GM10248 (cell line): ENCODE measurements at regions of chr4 and their contacts with region 1.

Region 1: DNA sequence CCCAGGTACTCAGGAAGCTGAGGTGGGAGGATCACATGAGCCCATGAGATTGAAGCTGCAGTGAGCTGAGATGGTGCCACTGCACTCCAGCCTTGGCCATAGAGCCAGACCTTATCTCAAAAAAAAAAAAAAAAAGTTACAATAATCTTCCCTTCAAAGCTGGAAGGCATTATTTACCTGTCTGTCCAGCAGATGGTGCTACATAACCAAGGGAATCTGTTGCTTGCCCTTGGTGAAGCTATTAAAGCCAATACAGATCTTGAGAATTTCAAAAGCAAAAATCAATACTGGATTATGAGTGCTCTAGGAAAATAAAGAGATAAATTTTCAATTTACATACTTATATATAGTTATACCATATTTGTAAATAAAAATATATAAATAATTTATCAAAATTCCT is 25.9 kb downstream of the PKD2 start:
- DNase-seq: peak; percentile 50
- CTCF ChIP-seq: peak; percentile 70

Region 2: DNA sequence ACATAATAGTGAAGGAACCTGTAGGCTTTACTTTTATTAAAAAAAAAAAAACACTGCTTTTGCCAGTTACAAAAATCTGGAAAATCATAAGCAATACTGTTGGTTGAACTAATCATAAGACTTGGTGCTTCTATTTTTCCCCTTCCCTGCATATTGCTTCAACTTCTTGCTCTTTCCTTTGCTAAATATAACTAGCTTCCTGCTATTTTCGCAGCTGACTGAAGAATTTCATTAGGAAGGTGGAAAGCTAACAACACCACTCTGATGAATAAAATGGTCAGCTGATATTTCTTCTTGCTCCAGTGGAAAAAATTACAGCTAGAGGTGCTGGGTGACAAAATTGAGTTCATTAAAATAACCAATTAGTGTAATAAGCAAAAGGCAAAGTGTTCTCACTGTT is 161.3 kb before region 1 on chr4:
- CTCF ChIA-PET with region 1: no interaction called
- POLR2A ChIA-PET with region 1: no interaction called
- DNase-seq: no peak
- CTCF ChIP-seq: no peak

Region 3: DNA sequence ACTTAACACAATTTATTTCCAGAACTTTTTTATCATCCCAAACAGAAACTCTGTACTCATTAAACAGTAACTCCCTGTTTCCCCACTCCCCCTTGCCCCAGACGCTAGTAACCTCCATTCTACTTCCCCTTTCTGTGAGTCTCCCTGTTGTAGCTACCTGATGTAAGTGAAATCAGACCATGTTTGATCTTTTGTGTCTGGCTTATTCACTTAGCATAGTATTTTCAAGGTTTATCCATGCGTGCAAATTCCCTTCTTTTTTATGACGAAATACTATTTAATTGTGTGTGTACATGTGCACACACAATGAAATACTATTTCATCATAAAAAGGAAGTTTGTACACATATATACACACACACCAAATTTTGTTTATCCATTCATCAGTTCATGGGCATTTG is 20.7 kb before region 1 on chr4:
- CTCF ChIA-PET with region 1: interaction called, 14 read pairs
- POLR2A ChIA-PET with region 1: no interaction called
- DNase-seq: peak; percentile 42
- CTCF ChIP-seq: no peak

Region 4: GRCh38 chr4:88021824-88022223 is 11.5 kb before region 1 on chr4:
- CTCF ChIA-PET with region 1: interaction called, 21 read pairs
- POLR2A ChIA-PET with region 1: interaction called, 3 read pairs
- DNase-seq: no peak
- CTCF ChIP-seq: no peak